ENCODE measurements at regions of chr9 and their contacts with region 1.

Region 1: DNA sequence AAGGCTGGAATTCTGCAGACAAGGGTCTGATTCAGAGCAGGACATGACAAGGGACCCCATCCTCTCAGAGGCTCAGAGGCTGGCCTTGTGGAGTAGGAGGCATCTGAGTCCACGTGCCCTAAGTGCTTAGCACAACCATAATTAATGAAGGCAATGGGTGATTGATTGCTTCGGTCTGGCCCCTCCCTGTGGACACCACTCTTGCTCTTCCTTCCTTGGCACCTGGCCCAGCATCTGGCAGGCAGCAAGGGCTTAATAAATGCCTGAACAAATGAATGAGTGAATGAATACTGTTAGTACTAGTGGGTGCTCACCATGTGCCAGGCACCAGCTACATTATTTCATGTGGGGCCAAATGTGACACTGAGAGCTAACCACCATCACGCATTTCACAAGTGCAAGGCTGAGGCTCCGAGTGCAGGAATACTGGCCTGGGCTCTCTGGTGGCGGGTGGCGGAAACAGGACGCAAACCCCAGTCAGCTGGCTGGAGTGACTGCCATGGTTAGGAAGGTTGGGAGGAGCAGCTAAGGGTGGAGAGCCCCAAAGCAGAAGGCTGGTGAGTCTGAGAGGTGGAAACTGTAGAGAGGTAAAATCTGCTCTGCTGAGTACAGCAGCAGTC is 53.6 kb downstream of the ASS1 start:
- DNase-seq: peak; percentile 26
- ATAC-seq: no peak
- H3K4me3 ChIP-seq: peak overlapping the region in 1 of 3 experiments; percentile 65; a peak in 1 of 6 replicates
- H3K27ac ChIP-seq: peak overlapping the region; percentile 95
- H3K4me1 ChIP-seq: peaks cover 42% of the 10 kb centered on the region
- H3K27me3 ChIP-seq: no peaks in the 10 kb centered on the region
- CTCF ChIP-seq: no peak
- EP300 ChIP-seq: no peak
- POLR2A ChIP-seq: no peak
- RAD21 ChIP-seq: no peak; the same call in 1 of the 2 replicates

Region 2: GRCh38 chr9:128927731-128928411 is 1570.5 kb before region 1 on chr9:
- CTCF ChIA-PET with region 1: no interaction called
- POLR2A ChIA-PET with region 1: no interaction called
- in situ Hi-C with region 1: no loop called
- intact Hi-C with region 1: no loop called
- DNase-seq: no peak
- ATAC-seq: peak; percentile 89
- H3K4me3 ChIP-seq: no peak overlapping the region
- H3K27ac ChIP-seq: no peak overlapping the region
- H3K4me1 ChIP-seq: peaks cover 17% of the 10 kb centered on the region
- H3K27me3 ChIP-seq: no peaks in the 10 kb centered on the region
- CTCF ChIP-seq: peak; percentile 96
- EP300 ChIP-seq: no peak
- POLR2A ChIP-seq: no peak
- RAD21 ChIP-seq: peak; percentile 92

Region 3: DNA sequence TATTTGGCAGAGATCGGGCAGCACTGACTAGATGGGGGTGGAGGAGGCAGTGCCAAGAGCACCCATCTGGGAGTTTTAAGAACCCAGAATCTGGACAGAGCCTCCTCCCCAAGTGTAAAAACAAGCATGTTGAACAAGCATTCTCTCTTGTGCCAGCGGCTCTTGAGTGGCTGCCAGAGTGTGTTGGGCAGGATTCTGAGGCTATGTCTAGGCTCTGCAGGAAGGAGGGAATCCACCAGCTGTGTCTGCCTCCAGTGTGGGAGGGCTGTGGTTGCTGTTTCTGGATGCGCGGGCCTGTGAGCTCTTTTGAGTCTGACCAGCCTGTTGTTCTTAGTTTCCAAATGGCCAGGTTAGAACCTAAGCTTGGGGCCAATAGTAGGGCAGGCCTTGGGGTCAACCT is 193.0 kb before region 1 on chr9:
- CTCF ChIA-PET with region 1: no interaction called
- POLR2A ChIA-PET with region 1: no interaction called
- in situ Hi-C with region 1: no loop called
- intact Hi-C with region 1: no loop called
- DNase-seq: no peak
- ATAC-seq: no peak
- H3K4me3 ChIP-seq: no peak overlapping the region
- H3K27ac ChIP-seq: no peak overlapping the region
- H3K4me1 ChIP-seq: no peaks in the 10 kb centered on the region
- H3K27me3 ChIP-seq: peaks cover 6 to 33% of the 10 kb centered on the region in 2 experiments; a peak in 3 of 5 replicates
- CTCF ChIP-seq: no peak
- EP300 ChIP-seq: no peak
- POLR2A ChIP-seq: no peak
- RAD21 ChIP-seq: no peak

Region 4: DNA sequence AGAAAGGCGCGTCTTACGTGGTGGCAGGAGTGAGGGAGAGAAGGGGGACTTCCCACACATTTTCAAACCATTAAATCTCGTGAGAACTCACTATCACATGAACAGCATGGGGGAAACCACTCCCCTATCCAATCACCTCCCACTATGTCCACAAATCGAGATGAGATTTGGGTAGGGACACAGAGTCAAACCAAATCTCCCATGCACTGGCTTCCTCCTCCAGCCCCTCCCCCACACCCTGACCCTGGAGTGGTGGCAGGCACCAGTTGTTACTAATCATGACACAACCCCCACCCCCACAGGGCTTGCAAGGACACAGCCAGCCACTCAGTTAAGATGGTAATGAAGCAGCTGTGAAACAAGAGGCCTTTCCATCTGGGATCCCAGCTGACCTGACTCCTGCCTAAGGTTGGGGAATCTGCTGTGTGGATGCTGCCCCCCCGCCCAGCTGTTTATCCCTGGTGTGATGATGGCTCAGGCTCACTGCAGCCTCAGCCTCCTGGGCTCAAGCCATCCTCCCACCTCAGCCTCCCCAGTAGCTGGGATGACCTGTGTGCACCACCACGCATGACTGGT is 23.9 kb after region 1 on chr9:
- CTCF ChIA-PET with region 1: no interaction called
- POLR2A ChIA-PET with region 1: interaction called, 86 read pairs
- in situ Hi-C with region 1: no loop called
- intact Hi-C with region 1: no loop called
- DNase-seq: no peak
- ATAC-seq: no peak
- H3K4me3 ChIP-seq: no peak overlapping the region
- H3K27ac ChIP-seq: no peak overlapping the region
- H3K4me1 ChIP-seq: peaks cover 46% of the 10 kb centered on the region
- H3K27me3 ChIP-seq: peaks cover 0 to 10% of the 10 kb centered on the region in 2 experiments; a peak in 3 of 5 replicates
- CTCF ChIP-seq: no peak
- EP300 ChIP-seq: no peak
- POLR2A ChIP-seq: no peak
- RAD21 ChIP-seq: no peak

Region 5: GRCh38 chr9:130535818-130536561 is 37.6 kb after region 1 on chr9:
- CTCF ChIA-PET with region 1: no interaction called
- POLR2A ChIA-PET with region 1: interaction called, 86 read pairs
- in situ Hi-C with region 1: no loop called
- intact Hi-C with region 1: no loop called
- DNase-seq: peak; percentile 25
- ATAC-seq: peak; percentile 76
- H3K4me3 ChIP-seq: peak overlapping the region; percentile 43 to 60 (median 45)
- H3K27ac ChIP-seq: no peak overlapping the region
- H3K4me1 ChIP-seq: peaks cover 33% of the 10 kb centered on the region
- H3K27me3 ChIP-seq: peaks cover 0 to 15% of the 10 kb centered on the region in 2 experiments; a peak in 2 of 5 replicates
- CTCF ChIP-seq: no peak
- EP300 ChIP-seq: no peak
- POLR2A ChIP-seq: no peak
- RAD21 ChIP-seq: no peak

Region 6: GRCh38 chr9:130599625-130600024 is 101.2 kb after region 1 on chr9:
- CTCF ChIA-PET with region 1: no interaction called
- POLR2A ChIA-PET with region 1: interaction called, 17 read pairs
- in situ Hi-C with region 1: no loop called
- intact Hi-C with region 1: no loop called
- DNase-seq: no peak
- ATAC-seq: no peak
- H3K4me3 ChIP-seq: no peak overlapping the region
- H3K27ac ChIP-seq: peak overlapping the region; percentile 35
- H3K4me1 ChIP-seq: peaks cover 63% of the 10 kb centered on the region
- H3K27me3 ChIP-seq: no peaks in the 10 kb centered on the region
- CTCF ChIP-seq: no peak
- EP300 ChIP-seq: no peak
- POLR2A ChIP-seq: no peak
- RAD21 ChIP-seq: no peak

Measured in HepG2 (cell line).